ENCODE measurements at regions of chrX and their contacts with region 1.

Region 1: DNA sequence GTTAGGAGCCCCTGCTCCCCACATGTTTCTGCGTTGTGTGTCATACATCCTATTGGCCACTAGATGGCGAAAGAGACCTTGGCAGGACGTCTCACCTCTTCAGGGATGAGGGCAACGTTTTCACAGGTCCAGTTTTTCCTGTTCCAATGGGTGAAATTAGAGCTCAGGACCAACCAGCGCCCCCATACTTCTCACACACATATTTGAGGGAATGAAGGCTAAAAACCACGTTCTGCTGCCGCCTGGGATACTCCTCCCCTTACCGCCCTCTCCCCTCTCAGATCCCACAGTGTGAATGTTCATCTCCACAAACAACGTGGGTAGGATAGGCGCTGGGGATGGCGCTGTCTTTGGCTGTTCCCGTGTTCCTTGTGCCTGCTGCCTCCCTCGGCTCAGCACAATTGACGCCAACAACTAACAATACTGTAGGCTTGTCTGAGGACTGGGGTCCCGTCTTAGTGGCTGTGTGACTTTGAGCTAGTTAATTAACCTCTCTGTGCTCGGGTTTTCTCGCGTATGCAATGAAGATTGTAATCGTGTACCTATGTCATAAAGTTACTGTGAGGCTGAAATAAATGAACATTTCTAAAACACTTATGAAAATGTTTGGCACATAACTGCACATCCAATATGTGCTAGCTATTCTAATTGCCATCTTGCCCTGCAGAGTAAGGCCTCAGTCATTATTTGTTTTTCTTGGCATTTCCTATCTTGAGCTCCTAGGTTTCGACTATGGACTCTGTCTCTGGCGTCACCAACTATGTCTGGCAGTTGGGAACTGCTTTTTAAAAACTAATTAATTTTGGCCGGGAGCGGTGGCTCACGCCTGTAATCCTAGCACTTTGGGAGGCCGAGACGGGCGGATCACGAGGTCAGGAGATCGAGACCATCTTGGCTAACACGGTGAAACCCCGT is 181.3 kb upstream of the STK26 start:
- DNase-seq: peak; percentile 19
- H3K4me3 ChIP-seq: no peak overlapping the region
- H3K27ac ChIP-seq: no peak overlapping the region
- H3K4me1 ChIP-seq: no peaks in the 10 kb centered on the region
- H3K27me3 ChIP-seq: no peaks in the 10 kb centered on the region
- CTCF ChIP-seq: peak; percentile 59 to 61
- POLR2A ChIP-seq: no peak

Region 2: DNA sequence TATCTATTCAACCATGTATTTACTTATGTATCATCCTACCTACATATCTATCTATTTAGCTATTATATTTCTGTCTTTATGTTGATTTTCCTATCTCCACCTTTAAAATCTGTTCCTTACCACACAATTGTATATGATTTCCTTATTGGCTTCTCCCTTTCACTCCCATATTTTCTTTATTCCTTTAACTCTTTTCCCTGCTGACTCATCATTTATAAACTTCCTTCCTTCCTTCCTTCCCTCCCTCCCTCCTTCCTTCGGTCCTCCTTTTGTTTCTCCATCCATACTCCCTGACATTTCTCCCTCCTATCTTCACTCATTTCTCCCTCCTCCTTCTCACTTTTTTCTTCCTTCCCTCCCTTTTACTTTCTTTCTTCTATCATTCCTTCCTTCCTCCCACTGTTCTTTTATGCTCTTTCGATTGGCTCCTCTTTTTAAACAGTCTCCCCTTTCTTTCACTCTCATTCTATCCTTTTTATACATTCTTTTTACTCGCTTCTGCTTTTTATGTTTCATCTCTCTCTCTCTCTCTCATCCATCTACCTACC is 1339.7 kb before region 1 on chrX:
- CTCF ChIA-PET with region 1: no interaction called
- POLR2A ChIA-PET with region 1: no interaction called
- dilution Hi-C with region 1: no loop called
- intact Hi-C with region 1: no loop called
- DNase-seq: no peak
- H3K4me3 ChIP-seq: no peak overlapping the region
- H3K27ac ChIP-seq: no peak overlapping the region
- H3K4me1 ChIP-seq: no peaks in the 10 kb centered on the region
- H3K27me3 ChIP-seq: no peaks in the 10 kb centered on the region
- CTCF ChIP-seq: no peak
- POLR2A ChIP-seq: no peak

Region 3: GRCh38 chrX:131763674-131764073 is 78.1 kb before region 1 on chrX:
- CTCF ChIA-PET with region 1: no interaction called
- POLR2A ChIA-PET with region 1: no interaction called
- dilution Hi-C with region 1: no loop called
- intact Hi-C with region 1: no loop called
- DNase-seq: no peak
- H3K4me3 ChIP-seq: no peak overlapping the region
- H3K27ac ChIP-seq: no peak overlapping the region
- H3K4me1 ChIP-seq: no peaks in the 10 kb centered on the region
- H3K27me3 ChIP-seq: no peaks in the 10 kb centered on the region
- CTCF ChIP-seq: no peak
- POLR2A ChIP-seq: no peak

Region 4: GRCh38 chrX:132022967-132023895 is 181.5 kb after region 1 on chrX and contains the start of gene STK26:
- CTCF ChIA-PET with region 1: no interaction called
- POLR2A ChIA-PET with region 1: no interaction called
- dilution Hi-C with region 1: no loop called
- intact Hi-C with region 1: loop called (anchors 2 kb)
- DNase-seq: peak; percentile 50
- H3K4me3 ChIP-seq: peak within 1 kb of the TSS; percentile 4 to 73 (median 45)
- H3K27ac ChIP-seq: peak within 1 kb of the TSS; percentile 6
- H3K4me1 ChIP-seq: peaks cover 4% of the 10 kb centered on the region
- H3K27me3 ChIP-seq: no peaks in the 10 kb centered on the region
- CTCF ChIP-seq: no peak
- POLR2A ChIP-seq: no peak
- total RNA-seq, gene STK26: 3.7 and 5.2 TPM in 2 replicates

Region 5: GRCh38 chrX:132219343-132219768 is 377.6 kb after region 1 on chrX and contains the start of gene RAP2C:
- CTCF ChIA-PET with region 1: interaction called, 34 read pairs
- POLR2A ChIA-PET with region 1: no interaction called
- dilution Hi-C with region 1: no loop called
- intact Hi-C with region 1: loop called (anchors 1 kb)
- DNase-seq: peak; percentile 67
- H3K4me3 ChIP-seq: peak within 1 kb of the TSS; percentile 82 to 91 (median 83)
- H3K27ac ChIP-seq: peak within 1 kb of the TSS; percentile 78
- H3K4me1 ChIP-seq: peaks cover 11% of the 10 kb centered on the region
- H3K27me3 ChIP-seq: no peaks in the 10 kb centered on the region
- CTCF ChIP-seq: peak; percentile 48 to 64
- POLR2A ChIP-seq: no peak
- total RNA-seq, gene RAP2C: 22.2 and 23.4 TPM in 2 replicates

Region 6: DNA sequence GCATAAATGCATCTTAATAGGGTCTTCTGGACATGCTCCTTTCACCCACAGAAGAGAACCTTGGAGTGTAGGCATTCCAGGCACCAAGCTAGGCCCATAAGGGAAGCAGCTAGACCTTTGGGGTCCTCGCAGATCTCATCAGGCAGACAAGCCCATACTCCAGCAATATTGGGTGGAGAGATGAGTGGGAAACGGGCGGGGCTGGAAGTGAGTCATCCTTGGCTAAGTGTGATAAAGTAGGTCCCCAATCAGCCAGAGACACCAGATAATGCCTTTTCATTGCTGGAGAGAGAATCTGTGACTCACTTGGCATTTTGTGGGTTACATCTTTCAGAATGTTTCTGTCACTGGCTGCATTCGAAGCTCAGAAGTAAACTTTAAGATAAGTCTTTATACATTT is 780.4 kb after region 1 on chrX:
- CTCF ChIA-PET with region 1: interaction called, 10 read pairs
- POLR2A ChIA-PET with region 1: no interaction called
- dilution Hi-C with region 1: no loop called
- intact Hi-C with region 1: no loop called
- DNase-seq: peak; percentile 37
- H3K4me3 ChIP-seq: no peak overlapping the region
- H3K27ac ChIP-seq: no peak overlapping the region
- H3K4me1 ChIP-seq: peaks cover 7% of the 10 kb centered on the region
- H3K27me3 ChIP-seq: no peaks in the 10 kb centered on the region
- CTCF ChIP-seq: no peak
- POLR2A ChIP-seq: no peak

Measured in endothelial cell of umbilical vein (primary cell).